Spleen (tissue), 13 donors: ENCODE measurements at regions of chr10 and their contacts with region 1.

Region 1: DNA sequence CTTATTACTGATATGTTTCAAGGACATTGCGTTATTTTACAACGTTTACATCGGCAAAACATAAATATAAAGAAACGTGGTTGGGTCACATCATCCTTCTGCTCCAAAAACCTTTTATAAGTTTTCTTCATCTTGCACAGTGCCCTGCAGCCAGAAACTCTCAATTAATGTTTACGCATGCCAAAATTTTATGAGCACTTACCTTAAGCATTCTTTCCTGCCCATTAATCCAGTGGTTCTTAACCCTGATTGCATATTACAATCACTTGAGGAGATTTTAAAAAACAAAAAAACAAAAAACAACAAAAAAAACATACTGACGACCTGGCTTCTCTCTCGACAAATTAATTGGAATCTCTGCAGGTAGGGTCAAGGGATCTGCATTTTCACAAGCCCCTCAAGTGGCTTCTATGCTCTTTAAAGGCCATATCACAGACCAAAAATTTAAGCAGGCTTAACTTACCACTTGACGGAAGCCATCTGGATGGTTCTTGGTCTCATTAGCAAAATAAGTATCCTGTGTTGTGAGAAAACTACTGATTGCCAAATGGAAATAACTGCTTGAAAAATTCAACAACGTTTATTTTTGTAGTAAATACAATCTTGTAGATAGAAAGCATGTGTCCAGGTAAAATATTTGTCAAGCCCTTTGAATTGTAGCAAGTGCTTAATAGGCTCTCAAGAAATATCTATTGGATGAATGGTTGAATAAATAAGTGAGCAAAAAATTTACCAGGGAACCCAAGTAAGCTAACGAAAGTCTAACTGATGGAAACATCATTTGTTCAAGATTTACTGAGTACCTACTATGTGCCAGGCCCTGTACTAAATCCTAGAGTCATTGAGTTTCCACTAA is 30.9 kb upstream of the SLC16A12 start:
- DNase-seq: no peak
- H3K4me3 ChIP-seq: no peak overlapping the region
- H3K27ac ChIP-seq: peak overlapping the region in 1 of 8 donors; percentile 36
- H3K4me1 ChIP-seq: peaks cover 0 to 6% (median 0%) of the 10 kb centered on the region in 6 donors
- H3K27me3 ChIP-seq: peaks cover 0 to 4% (median 0%) of the 10 kb centered on the region in 7 donors
- CTCF ChIP-seq: no peak
- POLR2A ChIP-seq: no peak

Region 2: GRCh38 chr10:89426230-89426868 is 140.0 kb before region 1 on chr10:
- intact Hi-C with region 1: loop called (anchors 5 kb)
- DNase-seq: no peak
- H3K4me3 ChIP-seq: no peak overlapping the region
- H3K27ac ChIP-seq: no peak overlapping the region
- H3K4me1 ChIP-seq: peaks cover 0 to 3% (median 0%) of the 10 kb centered on the region in 6 donors
- H3K27me3 ChIP-seq: no peaks in the 10 kb centered on the region
- CTCF ChIP-seq: peak; percentile 35 to 81 (median 69)
- POLR2A ChIP-seq: no peak

Region 3: GRCh38 chr10:89684604-89685003 is 118.3 kb after region 1 on chr10:
- intact Hi-C with region 1: no loop called
- DNase-seq: no peak
- H3K4me3 ChIP-seq: no peak overlapping the region
- H3K27ac ChIP-seq: no peak overlapping the region
- H3K4me1 ChIP-seq: no peaks in the 10 kb centered on the region
- H3K27me3 ChIP-seq: peaks cover 0 to 5% (median 0%) of the 10 kb centered on the region in 7 donors
- CTCF ChIP-seq: no peak
- POLR2A ChIP-seq: no peak

Region 4: GRCh38 chr10:89973326-89973725 is 407.0 kb after region 1 on chr10:
- intact Hi-C with region 1: no loop called
- DNase-seq: no peak
- H3K4me3 ChIP-seq: no peak overlapping the region
- H3K27ac ChIP-seq: no peak overlapping the region
- H3K4me1 ChIP-seq: no peaks in the 10 kb centered on the region
- H3K27me3 ChIP-seq: no peaks in the 10 kb centered on the region
- CTCF ChIP-seq: no peak
- POLR2A ChIP-seq: no peak